IMR-90 (cell line): ENCODE measurements at regions of chr2 and their contacts with region 1.

Region 1: DNA sequence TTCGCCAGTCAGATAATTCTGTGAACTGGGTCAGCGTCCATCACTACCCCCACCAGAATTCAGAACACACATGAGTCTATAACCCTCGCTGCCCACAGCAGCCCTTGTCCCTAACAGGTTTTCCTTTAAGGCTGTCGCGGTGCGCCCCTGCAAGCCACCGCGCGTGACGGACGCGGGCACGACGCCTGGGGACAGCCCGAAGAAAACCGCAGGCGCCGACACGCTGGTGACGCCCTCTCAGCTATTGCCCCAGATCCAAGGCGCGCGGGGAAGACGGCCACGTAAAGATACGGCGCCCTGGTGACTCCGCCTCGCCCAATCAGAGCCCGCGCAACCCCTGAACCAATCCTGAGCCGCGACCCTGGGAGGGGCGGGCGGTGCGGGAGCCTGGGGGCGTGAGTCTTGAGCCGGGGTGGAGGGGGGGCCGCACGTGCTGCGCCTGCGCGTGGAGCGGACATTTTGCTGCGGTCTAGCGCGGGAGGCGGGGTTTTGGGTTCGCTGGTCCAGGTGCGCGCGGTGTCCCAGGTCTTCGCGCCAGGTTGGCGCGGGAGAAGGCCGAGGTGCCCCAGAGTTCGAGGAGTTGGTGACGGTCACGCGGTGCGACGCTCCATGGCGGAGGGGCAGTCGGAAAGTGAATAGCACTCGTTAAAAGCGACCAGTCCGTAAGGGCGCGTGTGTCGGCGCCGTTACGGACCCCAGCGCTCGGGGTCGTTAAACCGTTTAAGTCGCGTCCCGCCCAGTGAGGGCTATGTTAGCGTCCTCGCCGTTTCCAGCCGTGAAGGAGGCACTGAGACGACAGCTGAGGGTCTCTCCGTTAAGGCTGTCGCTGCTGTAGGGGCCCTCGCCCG is 15.9 kb downstream of the NMUR1 start:
- DNase-seq: peak; percentile 93
- ATAC-seq: peak; percentile 100
- H3K4me3 ChIP-seq: peak overlapping the region; percentile 90
- H3K27ac ChIP-seq: peak overlapping the region; percentile 81
- H3K4me1 ChIP-seq: 0 out of 2 replicates have a peak, but pooled peaks cover 2% of the 10 kb centered on the region
- H3K27me3 ChIP-seq: no peaks in the 10 kb centered on the region
- CTCF ChIP-seq: no peak
- POLR2A ChIP-seq: peak; percentile 89
- RAD21 ChIP-seq: no peak

Region 2: GRCh38 chr2:231557571-231558237 is 43.4 kb after region 1 on chr2:
- CTCF ChIA-PET with region 1: interaction called, 8 read pairs
- POLR2A ChIA-PET with region 1: interaction called, 3 read pairs
- dilution Hi-C with region 1: no loop called
- in situ Hi-C with region 1: no loop called
- intact Hi-C with region 1: loop called (anchors 1 kb)
- DNase-seq: peak; percentile 81
- ATAC-seq: peak; percentile 95
- H3K4me3 ChIP-seq: no peak overlapping the region
- H3K27ac ChIP-seq: no peak overlapping the region
- H3K4me1 ChIP-seq: peaks cover 8% of the 10 kb centered on the region; the same call in 1 of the 2 replicates
- H3K27me3 ChIP-seq: no peaks in the 10 kb centered on the region
- CTCF ChIP-seq: peak; percentile 82
- POLR2A ChIP-seq: no peak
- RAD21 ChIP-seq: peak; percentile 84

Region 3: DNA sequence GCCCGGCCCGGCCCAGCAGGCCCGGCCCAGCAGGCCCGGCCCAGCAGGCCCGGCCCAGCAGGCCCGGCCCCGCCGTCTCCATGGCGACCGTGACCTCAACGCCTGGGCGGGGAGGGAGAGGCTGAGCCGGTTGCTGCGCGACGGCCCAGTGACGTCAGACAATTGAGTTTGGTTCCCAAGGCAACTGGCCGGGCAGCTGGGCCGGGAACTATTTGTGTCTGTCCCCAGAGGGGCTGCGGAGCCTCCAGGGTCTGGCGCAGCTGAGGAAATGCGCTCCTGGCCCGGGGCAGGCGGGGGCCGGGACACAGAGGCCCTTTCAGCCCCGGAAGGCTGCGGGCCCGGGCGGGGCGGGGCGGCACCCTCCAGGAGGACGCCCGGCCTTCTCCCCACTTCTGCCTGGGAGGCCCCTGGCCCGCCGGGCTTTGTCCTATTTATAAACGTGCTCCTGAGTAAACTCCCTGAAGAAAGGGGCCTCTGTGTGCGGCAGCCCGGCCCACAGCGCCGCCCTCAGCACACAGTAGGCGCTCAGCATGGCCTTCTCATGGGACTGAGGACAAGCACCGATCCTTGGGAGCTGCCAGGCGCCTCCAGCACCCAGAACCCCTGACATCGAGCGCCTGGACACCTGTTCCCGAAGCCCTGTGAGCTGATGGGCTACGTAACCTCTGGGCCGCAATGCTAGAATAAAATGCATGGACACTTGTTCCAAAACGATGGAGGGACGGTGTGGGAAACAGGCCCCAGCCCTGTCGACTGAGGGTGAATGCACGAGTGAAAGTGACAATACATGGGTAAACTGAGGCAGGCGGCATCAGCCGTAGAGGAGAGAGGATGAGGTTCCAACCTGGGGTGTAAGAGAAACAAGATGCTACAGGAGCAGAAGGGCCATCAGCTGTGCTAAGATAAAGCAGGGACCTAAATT is 90.6 kb after region 1 on chr2:
- CTCF ChIA-PET with region 1: interaction called, 5 read pairs
- POLR2A ChIA-PET with region 1: no interaction called
- dilution Hi-C with region 1: no loop called
- in situ Hi-C with region 1: loop called (anchors 5 kb)
- intact Hi-C with region 1: loop called (anchors 1 kb)
- DNase-seq: peak; percentile 95
- ATAC-seq: peak; percentile 93
- H3K4me3 ChIP-seq: peak overlapping the region; percentile 42
- H3K27ac ChIP-seq: peak overlapping the region; percentile 67
- H3K4me1 ChIP-seq: peaks cover 11% of the 10 kb centered on the region
- H3K27me3 ChIP-seq: no peaks in the 10 kb centered on the region
- CTCF ChIP-seq: no peak
- POLR2A ChIP-seq: peak; percentile 91
- RAD21 ChIP-seq: peak; percentile 12; the same call in 1 of the 2 replicates